Left ventricle myocardium superior (tissue), 1 donor: ENCODE measurements at regions of chr7 and their contacts with region 1.

Region 1: DNA sequence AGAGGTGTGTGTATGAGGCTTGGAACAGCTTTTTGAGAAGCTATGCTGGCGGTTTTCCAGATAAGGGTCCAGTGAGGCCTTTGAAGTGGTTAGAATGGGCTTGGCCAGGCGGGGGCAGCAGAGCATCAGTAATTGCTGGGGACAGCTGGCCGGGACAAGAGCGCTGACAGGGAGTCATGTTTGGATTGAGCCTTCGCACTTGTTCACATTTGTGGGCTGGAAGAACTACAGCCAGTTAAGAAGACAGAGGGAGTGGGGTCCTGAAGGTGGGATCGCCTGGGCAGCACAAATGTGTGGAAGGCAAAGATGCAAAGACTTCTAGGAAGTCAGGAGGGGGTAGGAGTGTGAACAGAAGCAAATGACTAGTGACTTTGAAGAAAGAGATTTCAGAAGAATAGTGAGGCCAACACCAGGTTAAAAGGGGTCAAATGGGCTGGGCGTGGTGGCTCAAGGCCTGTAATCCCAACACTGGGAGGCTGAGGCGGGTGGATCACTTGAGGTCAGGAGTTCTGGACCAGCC is 12.7 kb upstream of the SDHAF3 start:
- DNase-seq: peak; percentile 90
- ATAC-seq: peak; percentile 93

Region 2: DNA sequence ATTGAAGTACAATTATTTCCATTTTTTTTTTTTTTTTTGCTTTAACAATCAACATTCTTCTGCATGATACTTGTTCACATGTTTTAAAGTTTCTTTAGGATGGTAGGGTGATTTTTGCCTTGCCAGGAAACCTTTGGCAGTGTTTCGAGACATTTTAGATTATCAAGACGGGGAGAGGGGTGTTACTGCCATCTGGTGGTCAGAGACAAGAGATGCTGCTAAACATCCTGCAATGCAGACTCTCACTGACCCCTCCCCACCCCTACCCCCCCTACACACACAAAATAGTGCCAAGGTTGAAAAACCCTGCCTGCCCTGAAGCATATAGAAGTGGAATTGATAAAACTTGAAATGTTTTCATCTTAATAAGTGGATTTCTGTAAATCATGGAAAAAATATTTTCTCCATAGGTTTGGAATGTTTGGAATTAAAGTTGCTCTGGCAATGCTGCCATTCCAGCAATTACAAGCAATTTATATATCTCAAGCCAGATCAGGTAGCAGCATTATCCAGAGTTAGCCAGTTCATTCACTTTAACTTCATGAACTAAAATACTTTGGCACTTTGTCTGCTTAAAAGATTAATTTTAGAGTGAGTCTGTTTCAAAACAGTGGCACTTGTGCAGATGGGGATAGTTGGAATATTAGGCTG is 74.8 kb after region 1 on chr7:
- intact Hi-C with region 1: loop called (anchors 1 kb)
- DNase-seq: no peak
- ATAC-seq: peak; percentile 41